ENCODE measurements at regions of chr12 and their contacts with region 1.

Region 1: GRCh38 chr12:121579981-121580868 is 598 bp downstream of the KDM2B start:
- DNase-seq: peak; percentile 66 to 87
- ATAC-seq: peak; percentile 57 to 78 (median 72)
- H3K4me3 ChIP-seq: peak overlapping the region; percentile 65
- H3K4me3 Mint-ChIP-seq: peak overlapping the region; percentile 99
- H3K27ac ChIP-seq: peak overlapping the region; percentile 92
- H3K27ac Mint-ChIP-seq: peak overlapping the region; percentile 93 to 98
- H3K4me1 ChIP-seq: peaks cover 44% of the 10 kb centered on the region
- H3K4me1 Mint-ChIP-seq: peaks cover 33 to 45% of the 10 kb centered on the region in 2 donors
- H3K27me3 ChIP-seq: no peaks in the 10 kb centered on the region
- H3K27me3 Mint-ChIP-seq: no peaks in the 10 kb centered on the region
- CTCF ChIP-seq: no peak

Region 2: GRCh38 chr12:120686151-120686689 is 894.0 kb before region 1 on chr12:
- intact Hi-C with region 1: no loop called
- DNase-seq: peak; percentile 95 to 100
- ATAC-seq: peak; percentile 71 to 86 (median 75)
- H3K4me3 ChIP-seq: peak overlapping the region; percentile 58
- H3K4me3 Mint-ChIP-seq: peak overlapping the region; percentile 93
- H3K27ac ChIP-seq: peak overlapping the region; percentile 80
- H3K27ac Mint-ChIP-seq: peak overlapping the region; percentile 90
- H3K4me1 ChIP-seq: peaks cover 40% of the 10 kb centered on the region
- H3K4me1 Mint-ChIP-seq: peaks cover 30 to 39% of the 10 kb centered on the region in 2 donors
- H3K27me3 ChIP-seq: no peaks in the 10 kb centered on the region
- H3K27me3 Mint-ChIP-seq: no peaks in the 10 kb centered on the region
- CTCF ChIP-seq: no peak

Region 3: DNA sequence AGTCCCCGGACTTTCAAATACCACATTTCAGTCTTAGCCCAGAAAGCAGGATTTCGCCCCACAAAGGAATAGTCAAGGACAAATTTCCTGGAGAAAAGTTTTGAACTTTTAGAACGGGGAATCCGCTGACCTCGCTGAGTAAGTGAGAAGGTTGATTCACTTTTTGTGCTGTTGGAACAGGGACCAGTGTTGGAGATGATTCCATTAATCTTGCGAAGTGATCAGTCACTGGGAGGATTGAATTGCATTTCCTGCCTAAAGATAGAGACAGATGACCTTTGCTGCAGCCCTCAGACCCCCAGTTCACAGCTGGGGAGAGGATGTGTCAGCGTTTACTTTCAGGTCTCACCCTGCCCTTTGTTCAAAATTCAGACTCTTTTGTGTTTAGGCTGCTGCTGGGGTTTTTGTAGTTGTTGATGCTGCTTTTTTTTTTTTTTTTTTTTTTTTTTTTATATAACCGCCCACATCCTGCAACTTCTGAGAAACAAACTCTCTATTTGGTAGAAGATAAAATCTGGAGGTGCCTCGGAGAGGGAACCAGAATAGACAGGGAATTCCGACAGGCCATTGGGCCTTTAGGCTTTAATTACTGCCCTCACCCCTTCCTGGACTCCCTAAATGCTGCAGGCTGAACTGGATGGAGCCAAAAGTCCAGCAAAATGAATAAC is 10.4 kb after region 1 on chr12:
- intact Hi-C with region 1: loop called (anchors 1 kb)
- DNase-seq: peak; percentile 63 to 89
- ATAC-seq: peak; percentile 74 to 84 (median 78)
- H3K4me3 ChIP-seq: peak overlapping the region; percentile 37
- H3K4me3 Mint-ChIP-seq: peak overlapping the region; percentile 89
- H3K27ac ChIP-seq: peak overlapping the region; percentile 98
- H3K27ac Mint-ChIP-seq: peak overlapping the region; percentile 95 to 99
- H3K4me1 ChIP-seq: peaks cover 39% of the 10 kb centered on the region
- H3K4me1 Mint-ChIP-seq: peaks cover 32 to 37% of the 10 kb centered on the region in 2 donors
- H3K27me3 ChIP-seq: no peaks in the 10 kb centered on the region
- H3K27me3 Mint-ChIP-seq: no peaks in the 10 kb centered on the region
- CTCF ChIP-seq: no peak

Region 4: GRCh38 chr12:121620328-121620891 is 40.2 kb after region 1 on chr12:
- intact Hi-C with region 1: loop called (anchors 5 kb)
- DNase-seq: no peak
- ATAC-seq: no peak
- H3K4me3 ChIP-seq: no peak overlapping the region
- H3K4me3 Mint-ChIP-seq: no peak overlapping the region
- H3K27ac ChIP-seq: no peak overlapping the region
- H3K27ac Mint-ChIP-seq: no peak overlapping the region
- H3K4me1 ChIP-seq: peaks cover 19% of the 10 kb centered on the region
- H3K4me1 Mint-ChIP-seq: peaks cover 8 to 11% of the 10 kb centered on the region in 2 donors
- H3K27me3 ChIP-seq: no peaks in the 10 kb centered on the region
- H3K27me3 Mint-ChIP-seq: no peaks in the 10 kb centered on the region
- CTCF ChIP-seq: no peak